Activated CD4-positive, alpha-beta T cell treated with anti-CD3 and anti-CD28 coated beads for 36 hours (primary cell): ENCODE measurements at regions of chr4 and their contacts with region 1.

Region 1: GRCh38 chr4:89254847-89255246 is 52.8 kb downstream of the GPRIN3 start:
- DNase-seq: peak; percentile 64
- ATAC-seq: peak; percentile 72
- H3K4me3 Mint-ChIP-seq: no peak overlapping the region
- H3K27ac Mint-ChIP-seq: peak overlapping the region; percentile 44
- H3K4me1 Mint-ChIP-seq: peaks cover 71% of the 10 kb centered on the region
- H3K27me3 Mint-ChIP-seq: no peaks in the 10 kb centered on the region

Region 2: DNA sequence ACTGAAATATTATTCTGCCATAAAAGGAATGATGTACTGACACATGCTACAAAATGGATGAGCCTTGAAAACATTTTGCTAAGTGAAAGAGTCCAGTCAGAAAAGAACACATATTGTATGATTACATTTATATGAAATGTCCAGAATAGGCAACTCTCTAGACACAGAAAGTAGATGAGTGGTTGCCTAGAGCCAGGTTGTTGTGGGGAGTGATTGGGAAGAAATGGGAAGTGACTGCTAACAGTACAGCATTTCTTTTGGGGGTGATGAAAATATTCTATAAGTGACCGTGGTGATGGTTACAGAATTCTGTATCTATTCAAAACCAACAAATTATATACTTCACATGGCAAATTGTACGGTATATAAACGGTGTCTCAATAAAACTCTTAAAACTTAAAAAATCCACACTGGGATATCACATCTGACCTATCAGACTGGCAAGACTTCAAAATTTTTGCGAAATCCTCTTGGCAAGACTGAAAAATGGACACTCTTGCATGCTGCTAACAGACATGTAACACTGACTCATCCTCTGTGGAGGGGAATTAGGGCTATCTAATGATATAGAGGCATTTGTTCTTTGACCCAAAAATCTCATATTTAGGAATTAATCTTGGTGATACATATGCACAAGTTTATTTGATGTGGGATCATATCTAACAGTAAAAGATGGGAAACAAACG is 269.6 kb before region 1 on chr4:
- CTCF ChIA-PET with region 1: no interaction called
- POLR2A ChIA-PET with region 1: no interaction called
- intact Hi-C with region 1: no loop called
- DNase-seq: no peak
- ATAC-seq: no peak
- H3K4me3 Mint-ChIP-seq: no peak overlapping the region
- H3K27ac Mint-ChIP-seq: no peak overlapping the region
- H3K4me1 Mint-ChIP-seq: no peaks in the 10 kb centered on the region
- H3K27me3 Mint-ChIP-seq: no peaks in the 10 kb centered on the region

Region 3: DNA sequence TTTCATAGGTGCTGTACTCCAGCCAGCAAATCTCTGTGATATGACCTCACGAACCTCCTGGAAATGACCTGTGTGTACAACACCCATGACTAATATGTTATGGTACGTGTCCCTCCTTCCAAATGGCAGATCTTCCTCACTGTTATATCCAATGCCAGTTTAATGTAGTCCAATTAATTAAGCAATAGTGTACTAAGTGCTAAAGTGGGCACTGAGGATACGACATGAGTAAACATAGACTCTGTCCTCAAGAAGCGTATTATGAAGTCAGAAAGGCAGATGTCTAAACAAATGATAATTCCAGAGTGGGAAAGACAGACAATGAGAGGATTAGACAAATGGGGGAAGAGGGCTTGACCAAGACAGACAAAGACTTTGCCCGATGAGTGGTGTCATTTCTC is 18.9 kb after region 1 on chr4:
- CTCF ChIA-PET with region 1: interaction called, 18 read pairs
- POLR2A ChIA-PET with region 1: no interaction called
- intact Hi-C with region 1: no loop called
- DNase-seq: no peak
- ATAC-seq: no peak
- H3K4me3 Mint-ChIP-seq: no peak overlapping the region
- H3K27ac Mint-ChIP-seq: no peak overlapping the region
- H3K4me1 Mint-ChIP-seq: peaks cover 70% of the 10 kb centered on the region
- H3K27me3 Mint-ChIP-seq: no peaks in the 10 kb centered on the region

Region 4: DNA sequence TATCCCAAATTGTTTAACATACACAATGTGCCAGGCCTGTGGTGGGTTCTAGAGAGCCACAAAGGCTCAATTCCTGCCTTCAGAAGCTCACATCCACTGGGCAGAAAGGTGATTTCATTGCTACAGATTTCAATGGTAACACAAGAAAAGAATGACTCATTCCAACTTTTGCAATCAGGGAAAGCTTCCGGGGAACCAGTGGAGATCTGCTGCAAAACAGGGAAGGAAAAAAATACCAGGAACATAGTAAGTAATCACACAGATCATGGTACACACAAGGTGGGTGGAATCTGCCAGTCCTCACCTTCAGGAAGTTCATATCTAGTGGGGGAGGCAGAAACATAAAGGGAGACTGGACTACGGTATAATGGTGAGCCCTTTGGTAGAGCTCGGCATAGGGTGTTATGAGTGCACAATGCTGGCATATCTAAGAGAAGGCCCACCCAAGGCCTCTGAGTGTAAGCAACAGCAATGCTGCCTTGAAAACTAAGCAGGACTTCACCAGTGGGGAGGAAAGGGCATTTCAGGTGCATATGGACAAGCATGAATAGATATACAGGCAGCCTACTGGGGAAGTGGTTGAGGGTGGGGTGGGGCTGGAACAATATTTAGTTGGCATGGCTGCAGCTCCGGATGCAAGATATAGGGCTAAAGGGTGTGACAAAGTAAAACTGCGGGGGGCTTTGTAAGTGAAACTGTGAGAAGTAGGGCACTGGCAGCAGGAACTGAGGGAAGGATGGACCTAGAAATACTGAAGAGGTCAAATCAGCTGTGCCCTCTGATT is 28.6 kb after region 1 on chr4:
- CTCF ChIA-PET with region 1: interaction called, 13 read pairs
- POLR2A ChIA-PET with region 1: no interaction called
- intact Hi-C with region 1: loop called in 1 of 2 experiments (anchors 2 kb)
- DNase-seq: peak; percentile 33
- ATAC-seq: peak; percentile 20
- H3K4me3 Mint-ChIP-seq: no peak overlapping the region
- H3K27ac Mint-ChIP-seq: peak overlapping the region; percentile 68
- H3K4me1 Mint-ChIP-seq: peaks cover 72% of the 10 kb centered on the region
- H3K27me3 Mint-ChIP-seq: no peaks in the 10 kb centered on the region

Region 5: DNA sequence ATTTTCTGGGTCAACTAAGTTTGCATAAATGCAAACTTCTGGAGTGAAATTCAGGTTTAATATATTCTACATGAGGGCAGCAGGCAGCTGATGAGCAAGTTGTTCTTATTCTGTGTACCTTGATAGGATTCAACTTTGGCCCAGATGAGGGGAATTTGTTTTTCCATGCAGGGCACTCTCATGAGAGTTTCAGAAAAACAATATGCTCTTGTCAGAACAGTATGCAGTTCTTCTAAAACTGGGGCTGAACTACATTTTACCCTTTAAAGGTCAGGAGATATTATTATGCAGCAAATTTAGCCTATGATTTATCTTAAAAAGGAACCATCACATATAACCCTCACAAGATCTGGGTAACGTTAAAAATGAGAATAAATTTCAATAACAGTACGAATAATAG is 33.6 kb after region 1 on chr4:
- CTCF ChIA-PET with region 1: interaction called, 13 read pairs
- POLR2A ChIA-PET with region 1: no interaction called
- intact Hi-C with region 1: loop called (anchors 2 to 5 kb)
- DNase-seq: no peak
- ATAC-seq: no peak
- H3K4me3 Mint-ChIP-seq: peak overlapping the region; percentile 67
- H3K27ac Mint-ChIP-seq: peak overlapping the region; percentile 94
- H3K4me1 Mint-ChIP-seq: peaks cover 95% of the 10 kb centered on the region
- H3K27me3 Mint-ChIP-seq: no peaks in the 10 kb centered on the region